ENCODE measurements at regions of chr5 and their contacts with region 1.

Region 1: DNA sequence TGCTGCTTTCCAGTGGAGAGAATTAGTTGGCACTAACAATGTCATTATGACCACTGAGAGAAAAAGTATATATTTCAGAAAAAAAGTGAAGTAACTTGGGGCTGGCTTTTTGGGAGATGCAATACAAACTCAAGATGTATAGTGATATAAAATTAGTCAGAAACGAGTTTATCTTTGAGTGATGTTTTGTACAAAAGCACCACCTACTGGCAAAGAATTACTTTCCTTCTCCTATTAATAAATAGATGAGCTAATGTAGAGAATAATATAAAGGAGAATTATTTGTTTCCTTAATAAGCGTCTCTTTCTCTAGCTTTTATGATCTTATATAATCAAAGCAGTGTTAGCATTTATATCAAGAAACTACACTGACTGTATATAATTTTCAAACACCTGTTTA is 158.8 kb downstream of the MEF2C start:
- DNase-seq: peak; percentile 29
- ATAC-seq: no peak
- H3K4me3 ChIP-seq: no peak overlapping the region
- H3K27ac ChIP-seq: no peak overlapping the region
- H3K4me1 ChIP-seq: no peaks in the 10 kb centered on the region
- H3K27me3 ChIP-seq: no peaks in the 10 kb centered on the region
- CTCF ChIP-seq: peak; percentile 52
- POLR2A ChIP-seq: no peak
- RAD21 ChIP-seq: peak; percentile 51

Region 2: GRCh38 chr5:90264689-90265544 is 1540.7 kb after region 1 on chr5:
- CTCF ChIA-PET with region 1: interaction called, 16 read pairs
- POLR2A ChIA-PET with region 1: no interaction called
- dilution Hi-C with region 1: no loop called
- in situ Hi-C with region 1: loop called (anchors 5 kb)
- intact Hi-C with region 1: loop called (anchors 1 kb)
- DNase-seq: peak; percentile 61
- ATAC-seq: peak; percentile 83
- H3K4me3 ChIP-seq: no peak overlapping the region
- H3K27ac ChIP-seq: no peak overlapping the region
- H3K4me1 ChIP-seq: no peaks in the 10 kb centered on the region
- H3K27me3 ChIP-seq: no peaks in the 10 kb centered on the region
- CTCF ChIP-seq: peak; percentile 98
- POLR2A ChIP-seq: 0 out of 2 replicates have a peak, but pooled peaks have one; percentile 29
- RAD21 ChIP-seq: peak; percentile 90

Measured in IMR-90 (cell line).